Pancreas (tissue), 10 donors: ENCODE measurements at regions of chr3 and their contacts with region 1.

Region 1: GRCh38 chr3:121883507-121883906 is 10.7 kb upstream of the SLC15A2 start:
- DNase-seq: no peak
- ATAC-seq: peak in 2 of 4 donors; percentile 56 to 79
- H3K4me3 ChIP-seq: no peak overlapping the region
- H3K27ac ChIP-seq: no peak overlapping the region
- H3K4me1 ChIP-seq: peaks cover 0 to 7% (median 0%) of the 10 kb centered on the region in 3 donors
- H3K27me3 ChIP-seq: no peaks in the 10 kb centered on the region
- CTCF ChIP-seq: peak in 3 of 4 donors; percentile 12 to 35 (median 19)

Region 2: DNA sequence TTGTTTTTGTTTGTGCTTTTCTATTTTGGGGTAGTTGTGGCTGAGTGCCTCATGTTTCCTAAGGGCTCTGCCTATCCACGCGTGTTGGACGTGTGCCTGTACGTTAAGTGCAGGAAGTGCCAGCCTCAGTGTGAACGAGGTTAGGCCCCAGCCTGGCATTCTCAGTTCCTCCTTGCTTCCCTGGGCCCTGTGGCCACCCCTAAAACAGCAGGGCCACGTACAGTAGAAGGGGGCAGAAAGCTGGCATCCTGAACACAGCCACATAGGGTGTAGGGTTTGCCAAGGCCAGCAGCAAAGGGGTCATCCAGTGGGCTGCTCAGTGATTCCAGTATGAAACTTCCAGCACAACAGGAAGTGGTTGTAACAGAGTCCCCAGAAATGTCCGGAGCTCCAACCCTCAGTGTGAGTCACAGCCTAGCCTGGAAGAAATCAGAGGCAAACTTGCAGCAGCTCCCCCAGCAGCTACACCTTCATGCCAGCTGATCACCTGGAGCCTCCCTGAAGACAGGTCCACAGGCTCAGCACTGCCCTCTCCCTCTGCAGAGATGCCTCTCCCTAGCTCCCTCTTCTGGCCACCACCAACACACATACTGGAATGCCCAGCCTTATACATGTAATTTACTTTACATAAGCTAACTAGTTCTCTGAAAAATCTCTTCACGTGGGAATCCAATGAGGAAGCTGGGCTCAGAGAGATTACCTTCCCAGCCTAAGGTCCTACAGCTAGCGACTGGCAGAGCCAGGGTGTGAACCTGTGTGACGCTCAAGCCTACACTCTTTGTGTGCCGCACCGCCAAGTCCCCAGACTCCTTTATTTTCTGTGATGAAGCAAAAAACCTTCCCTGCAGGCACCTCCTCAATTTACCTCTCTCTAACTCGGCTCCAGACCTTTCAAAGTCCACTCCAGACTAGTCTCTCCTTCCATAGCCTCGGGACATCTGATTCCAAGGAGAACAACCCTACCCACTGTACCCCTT is 111.9 kb after region 1 on chr3:
- intact Hi-C with region 1: loop called in 1 of 3 experiments (anchors 10 kb)
- DNase-seq: peak; percentile 58 to 79 (median 64)
- ATAC-seq: peak; percentile 87 to 96 (median 90)
- H3K4me3 ChIP-seq: no peak overlapping the region
- H3K27ac ChIP-seq: peak overlapping the region in 2 of 4 donors; percentile 51 to 52
- H3K4me1 ChIP-seq: no peaks in the 10 kb centered on the region
- H3K27me3 ChIP-seq: no peaks in the 10 kb centered on the region
- CTCF ChIP-seq: peak in 3 of 4 donors; percentile 12 to 45 (median 42)